ENCODE measurements at regions of chr3 and their contacts with region 1.

Region 1: GRCh38 chr3:141050576-141051442 is at the start of gene SPSB4:
- DNase-seq: peak; percentile 95
- H3K4me3 ChIP-seq: peak within 1 kb of the TSS; percentile 23 to 49; a peak in 3 of 4 replicates
- H3K27ac ChIP-seq: peak within 1 kb of the TSS in 1 of 2 experiments; percentile 50; a peak in 2 of 4 replicates
- H3K4me1 ChIP-seq: peaks cover 0 to 6% of the 10 kb centered on the region in 2 experiments; a peak in 2 of 4 replicates
- H3K27me3 ChIP-seq: peaks cover 22% of the 10 kb centered on the region
- CTCF ChIP-seq: no peak; the same call in 1 of the 2 replicates
- EP300 ChIP-seq: no peak
- RAD21 ChIP-seq: peak; percentile 51
- polyA plus RNA-seq, gene SPSB4: 0.10 and 0.21 TPM in 2 replicates

Region 2: GRCh38 chr3:140629357-140630139 is 421.3 kb before region 1 on chr3:
- CTCF ChIA-PET with region 1: no interaction called
- POLR2A ChIA-PET with region 1: no interaction called
- DNase-seq: no peak
- H3K4me3 ChIP-seq: no peak overlapping the region
- H3K27ac ChIP-seq: no peak overlapping the region
- H3K4me1 ChIP-seq: no peaks in the 10 kb centered on the region
- H3K27me3 ChIP-seq: no peaks in the 10 kb centered on the region
- CTCF ChIP-seq: no peak
- EP300 ChIP-seq: no peak
- RAD21 ChIP-seq: no peak

Region 3: DNA sequence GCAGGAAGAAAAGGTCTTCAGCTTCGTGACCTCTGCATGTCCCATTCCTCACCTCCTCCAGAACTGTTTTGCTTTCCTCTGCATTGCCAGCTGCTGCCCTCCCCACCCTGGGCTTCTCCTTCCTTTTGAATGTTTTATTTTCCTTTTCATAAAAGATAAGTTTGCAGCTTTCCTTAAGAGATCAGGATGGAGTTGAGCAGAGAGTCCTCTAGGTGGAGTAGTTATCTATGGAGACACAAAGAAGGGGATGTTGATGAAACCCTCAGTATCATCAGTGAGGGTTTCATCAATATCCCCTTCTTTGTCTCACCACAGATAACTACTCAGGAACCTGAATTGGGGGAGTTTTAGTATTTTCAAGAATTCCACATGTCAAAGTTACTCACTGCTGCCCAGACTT is 128.2 kb before region 1 on chr3:
- CTCF ChIA-PET with region 1: no interaction called
- POLR2A ChIA-PET with region 1: no interaction called
- DNase-seq: no peak
- H3K4me3 ChIP-seq: no peak overlapping the region
- H3K27ac ChIP-seq: no peak overlapping the region
- H3K4me1 ChIP-seq: no peaks in the 10 kb centered on the region; a peak in 1 of 4 replicates
- H3K27me3 ChIP-seq: no peaks in the 10 kb centered on the region
- CTCF ChIP-seq: peak; percentile 63
- EP300 ChIP-seq: no peak
- RAD21 ChIP-seq: peak; percentile 56

Region 4: DNA sequence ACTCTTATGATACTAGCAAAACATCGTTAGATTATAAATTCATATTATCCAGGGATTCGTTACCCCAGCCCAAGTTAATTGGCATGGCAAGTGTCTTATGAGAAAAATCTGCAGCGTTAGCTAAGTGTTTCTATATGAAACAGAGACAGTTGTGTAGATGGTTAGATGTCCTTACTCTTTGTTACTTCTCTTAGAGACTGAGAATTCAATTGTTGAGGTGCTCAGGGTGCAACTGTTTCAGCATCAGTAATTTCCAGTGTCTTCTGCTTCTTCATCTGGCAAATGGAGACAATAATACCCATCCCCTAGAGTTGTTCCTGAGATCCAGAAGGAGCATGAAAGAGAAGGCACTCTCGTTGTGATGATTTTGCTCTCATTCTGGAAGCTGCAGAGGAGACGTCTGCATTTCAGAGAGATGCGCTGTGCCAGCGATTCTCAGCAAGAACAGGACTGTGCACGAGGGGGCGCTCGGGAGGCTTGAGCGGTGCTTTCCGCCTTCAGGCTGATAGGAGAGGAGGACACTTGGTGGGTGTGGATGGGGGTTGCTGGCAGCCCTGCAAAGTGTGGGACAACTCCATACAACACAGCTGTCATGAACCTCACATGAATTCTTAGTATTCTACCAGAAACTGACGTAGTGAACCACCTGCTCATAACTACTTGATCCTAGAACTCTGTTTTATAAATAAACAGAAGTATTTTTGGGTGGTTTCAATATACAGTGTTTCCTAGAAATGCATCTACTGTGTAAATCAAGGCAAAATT is 39.4 kb before region 1 on chr3:
- CTCF ChIA-PET with region 1: interaction called, 47 read pairs
- POLR2A ChIA-PET with region 1: no interaction called
- DNase-seq: peak; percentile 79
- H3K4me3 ChIP-seq: no peak overlapping the region
- H3K27ac ChIP-seq: no peak overlapping the region
- H3K4me1 ChIP-seq: no peaks in the 10 kb centered on the region; a peak in 1 of 4 replicates
- H3K27me3 ChIP-seq: no peaks in the 10 kb centered on the region
- CTCF ChIP-seq: peak; percentile 76
- EP300 ChIP-seq: no peak
- RAD21 ChIP-seq: peak; percentile 85

Region 5: DNA sequence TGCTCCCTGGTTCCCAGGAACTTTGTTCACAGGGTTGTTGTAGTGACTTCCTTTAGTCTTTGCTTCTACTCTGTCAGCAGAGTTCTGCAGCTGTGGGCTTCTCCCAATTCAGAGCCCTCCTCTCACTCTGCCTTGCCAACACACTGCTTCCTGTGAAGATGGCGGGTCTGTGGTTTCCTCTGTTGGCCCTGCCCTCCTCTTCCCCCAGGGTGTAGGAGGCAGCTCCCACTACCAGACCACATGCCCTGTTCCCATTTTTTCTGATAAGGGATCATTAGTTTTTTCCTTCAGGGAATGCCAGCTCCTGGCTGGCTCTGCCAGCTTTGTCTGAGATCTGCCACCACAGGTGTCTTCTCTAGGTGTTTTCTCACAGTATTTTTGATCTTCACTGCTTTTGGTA is 13.0 kb after region 1 on chr3:
- CTCF ChIA-PET with region 1: interaction called, 61 read pairs
- POLR2A ChIA-PET with region 1: interaction called, 8 read pairs
- DNase-seq: peak; percentile 76
- H3K4me3 ChIP-seq: no peak overlapping the region
- H3K27ac ChIP-seq: peak overlapping the region in 1 of 2 experiments; percentile 64; a peak in 2 of 4 replicates
- H3K4me1 ChIP-seq: peaks cover 0 to 12% of the 10 kb centered on the region in 2 experiments; a peak in 2 of 4 replicates
- H3K27me3 ChIP-seq: no peaks in the 10 kb centered on the region
- CTCF ChIP-seq: no peak
- EP300 ChIP-seq: peak in 1 of 2 experiments; percentile 63; a peak in 1 of 4 replicates
- RAD21 ChIP-seq: no peak

Region 6: DNA sequence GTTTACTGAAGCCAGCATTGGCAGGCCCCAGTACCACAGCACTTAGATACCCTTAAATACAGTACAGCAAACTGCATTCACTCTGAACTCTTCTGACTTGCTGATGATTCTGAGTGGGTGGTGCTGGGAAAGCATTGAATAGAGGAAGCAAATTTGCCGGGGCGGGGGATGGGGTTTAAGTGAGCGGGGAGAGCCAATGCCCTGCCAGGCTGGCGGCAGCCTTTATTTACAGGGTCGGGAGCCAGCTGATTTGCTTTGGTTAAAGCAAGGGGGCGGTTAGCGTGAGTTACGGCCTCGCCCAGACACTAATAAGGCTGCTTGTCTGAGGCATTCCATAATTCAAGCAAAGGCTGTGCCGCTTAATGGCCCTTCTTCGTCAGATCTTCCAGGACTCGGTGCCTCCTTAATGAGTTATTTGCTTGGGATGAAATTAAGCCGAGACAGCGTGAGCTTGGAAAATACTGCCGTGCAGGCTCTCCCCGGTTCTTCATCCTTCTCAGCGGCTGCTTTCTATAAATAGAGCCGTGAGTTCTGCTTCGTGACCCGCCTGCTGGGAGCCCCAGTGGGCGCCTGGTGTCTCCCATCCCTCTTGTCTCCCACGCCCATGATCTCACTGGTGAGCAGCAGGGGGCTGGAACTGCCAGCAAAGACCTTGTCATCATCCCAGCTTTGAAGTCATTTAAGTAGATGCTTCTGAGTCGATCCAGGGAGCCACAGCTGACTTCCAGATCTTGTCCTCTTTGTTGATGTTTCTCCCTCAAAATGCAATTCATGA is 26.2 kb after region 1 on chr3:
- CTCF ChIA-PET with region 1: interaction called, 61 read pairs
- POLR2A ChIA-PET with region 1: interaction called, 6 read pairs
- DNase-seq: no peak
- H3K4me3 ChIP-seq: no peak overlapping the region
- H3K27ac ChIP-seq: no peak overlapping the region
- H3K4me1 ChIP-seq: peaks cover 0 to 14% of the 10 kb centered on the region in 2 experiments; a peak in 1 of 4 replicates
- H3K27me3 ChIP-seq: no peaks in the 10 kb centered on the region
- CTCF ChIP-seq: no peak
- EP300 ChIP-seq: no peak
- RAD21 ChIP-seq: no peak

Region 7: GRCh38 chr3:141094790-141095545 is 44.2 kb after region 1 on chr3:
- CTCF ChIA-PET with region 1: interaction called, 24 read pairs
- POLR2A ChIA-PET with region 1: interaction called, 4 read pairs
- DNase-seq: no peak
- H3K4me3 ChIP-seq: no peak overlapping the region
- H3K27ac ChIP-seq: no peak overlapping the region
- H3K4me1 ChIP-seq: peaks cover 0 to 49% of the 10 kb centered on the region in 2 experiments; a peak in 3 of 4 replicates
- H3K27me3 ChIP-seq: no peaks in the 10 kb centered on the region
- CTCF ChIP-seq: no peak
- EP300 ChIP-seq: no peak
- RAD21 ChIP-seq: no peak

Region 8: DNA sequence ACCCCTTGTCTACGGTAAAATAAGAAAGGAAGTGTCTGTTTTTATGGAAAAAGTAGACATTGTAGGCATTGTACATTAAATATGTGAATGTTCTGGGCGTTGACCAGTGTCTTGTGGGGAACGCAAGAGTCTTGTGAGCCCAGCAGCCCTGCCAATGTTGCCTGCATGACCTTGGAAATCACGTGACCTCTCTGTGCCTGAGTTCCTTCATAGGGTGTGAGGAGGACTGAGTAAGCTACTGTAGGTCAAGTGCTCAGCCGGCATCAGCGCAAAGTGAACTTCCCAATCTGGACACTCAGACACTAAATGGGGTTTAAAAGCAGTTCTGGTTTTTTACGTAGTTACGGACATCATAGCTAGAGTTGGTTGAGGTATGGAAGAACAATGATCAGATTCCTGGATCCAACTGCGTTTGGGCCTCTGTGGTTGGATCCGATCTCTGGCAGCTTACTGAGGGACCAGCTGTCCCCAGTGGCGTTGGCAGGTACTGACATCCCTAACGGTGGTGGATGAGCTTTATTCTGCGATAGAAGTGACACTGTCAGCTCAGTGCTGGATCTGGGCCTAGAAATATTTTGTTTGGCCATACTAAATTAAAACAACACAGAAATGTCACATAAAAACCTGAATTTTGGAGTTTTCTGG is 64.1 kb after region 1 on chr3:
- CTCF ChIA-PET with region 1: interaction called, 77 read pairs
- POLR2A ChIA-PET with region 1: interaction called, 3 read pairs
- DNase-seq: peak; percentile 50
- H3K4me3 ChIP-seq: no peak overlapping the region
- H3K27ac ChIP-seq: no peak overlapping the region
- H3K4me1 ChIP-seq: no peaks in the 10 kb centered on the region
- H3K27me3 ChIP-seq: no peaks in the 10 kb centered on the region
- CTCF ChIP-seq: peak; percentile 28; the same call in 1 of the 2 replicates
- EP300 ChIP-seq: no peak
- RAD21 ChIP-seq: peak; percentile 13; the same call in 1 of the 2 replicates